Common myeloid progenitor, CD34-positive (primary cell): ENCODE measurements at regions of chr22 and their contacts with region 1.

Region 1: GRCh38 chr22:45221201-45221600 is 19.5 kb downstream of the KIAA0930 start:
- DNase-seq: peak in 1 of 3 donors; percentile 45
- H3K4me3 ChIP-seq: peak overlapping the region in 2 of 7 experiments; percentile 46 to 56
- H3K27ac ChIP-seq: no peak overlapping the region
- H3K4me1 ChIP-seq: peaks cover 0 to 55% (median 48%) of the 10 kb centered on the region in 4 experiments
- H3K27me3 ChIP-seq: no peaks in the 10 kb centered on the region

Region 2: DNA sequence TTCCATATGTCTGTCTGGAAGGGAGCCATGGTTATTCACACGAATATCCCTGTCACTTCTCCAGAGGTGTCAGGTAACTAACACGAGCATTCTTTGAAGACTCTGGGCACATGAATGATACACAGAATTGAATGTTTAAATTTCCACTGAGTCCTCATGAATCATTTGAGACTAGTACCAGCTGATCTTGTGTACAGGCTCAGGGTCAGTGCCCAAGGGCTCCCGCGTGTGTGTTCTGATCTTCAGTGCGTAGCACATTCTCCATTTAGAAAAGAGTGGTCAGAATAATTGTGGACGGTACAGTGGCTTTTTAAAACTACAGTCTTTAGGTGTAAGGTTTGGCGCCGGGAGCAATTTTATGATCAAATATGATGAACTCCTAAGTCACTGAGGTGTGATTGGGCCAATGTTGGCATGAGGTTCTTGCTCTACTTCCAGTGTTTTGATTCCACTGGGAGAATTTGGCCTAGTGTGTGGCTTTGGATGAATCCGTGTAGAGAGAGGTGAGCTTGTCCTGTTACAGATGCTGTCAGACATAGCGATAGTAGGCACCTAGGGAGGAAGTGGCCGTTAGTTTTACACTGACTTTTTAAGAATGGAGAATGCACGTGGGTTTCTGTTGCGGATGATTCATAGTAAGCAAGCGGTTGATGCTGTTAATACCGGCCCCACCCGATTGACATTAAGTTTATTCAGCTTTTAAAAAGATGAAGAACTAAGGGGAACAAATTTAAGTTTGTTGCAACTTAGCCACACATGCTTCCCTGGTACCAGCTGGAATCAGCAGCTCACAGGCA is 35.3 kb before region 1 on chr22:
- CTCF ChIA-PET with region 1: no interaction called
- POLR2A ChIA-PET with region 1: no interaction called
- DNase-seq: no peak
- H3K4me3 ChIP-seq: no peak overlapping the region
- H3K27ac ChIP-seq: no peak overlapping the region
- H3K4me1 ChIP-seq: no peaks in the 10 kb centered on the region
- H3K27me3 ChIP-seq: no peaks in the 10 kb centered on the region

Region 3: DNA sequence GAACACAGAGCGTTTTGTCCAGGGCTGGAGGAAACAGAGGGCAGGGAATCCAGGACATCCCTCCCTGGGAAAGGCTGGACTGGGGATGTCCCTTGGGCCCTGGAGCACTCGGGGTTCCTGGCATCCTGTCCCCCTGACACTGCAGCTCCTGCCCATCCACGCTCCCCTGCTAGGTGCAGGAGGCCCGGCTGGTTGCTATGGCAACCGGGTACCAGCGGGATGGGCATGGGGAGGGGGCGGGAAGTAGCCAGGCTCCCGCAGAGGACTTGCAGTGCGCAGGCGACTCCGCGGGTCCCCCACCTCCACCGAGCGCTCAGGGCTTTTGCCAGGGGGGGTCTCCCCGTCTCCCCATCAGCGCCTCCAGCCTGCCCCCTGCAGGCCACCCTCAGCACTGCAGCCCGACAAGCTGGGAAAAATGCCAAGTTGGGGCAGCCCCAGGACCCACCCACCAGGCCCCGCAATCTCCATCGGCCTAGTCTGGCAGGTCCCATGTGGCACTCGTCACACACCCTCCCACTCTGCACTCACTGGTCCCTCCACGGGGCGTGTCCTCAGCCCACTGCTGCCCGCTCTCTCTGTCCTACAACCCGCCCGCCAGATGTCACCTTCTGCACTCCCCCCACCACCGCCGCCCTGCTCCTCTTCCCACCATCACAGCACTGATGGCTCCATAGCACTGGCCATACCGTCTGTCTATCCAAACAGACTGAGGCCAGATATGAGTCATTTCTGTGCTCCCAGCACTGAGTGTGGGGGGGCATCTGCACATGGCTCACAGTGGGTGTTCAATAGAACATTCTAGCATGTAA is 12.0 kb before region 1 on chr22:
- CTCF ChIA-PET with region 1: interaction called, 12 read pairs
- POLR2A ChIA-PET with region 1: no interaction called
- DNase-seq: peak in 2 of 3 donors; percentile 14 to 26
- H3K4me3 ChIP-seq: no peak overlapping the region
- H3K27ac ChIP-seq: no peak overlapping the region
- H3K4me1 ChIP-seq: peaks cover 0 to 13% (median 7%) of the 10 kb centered on the region in 4 experiments
- H3K27me3 ChIP-seq: no peaks in the 10 kb centered on the region